HCT116 (cell line): ENCODE measurements at regions of chr4 and their contacts with region 1.

Region 1: DNA sequence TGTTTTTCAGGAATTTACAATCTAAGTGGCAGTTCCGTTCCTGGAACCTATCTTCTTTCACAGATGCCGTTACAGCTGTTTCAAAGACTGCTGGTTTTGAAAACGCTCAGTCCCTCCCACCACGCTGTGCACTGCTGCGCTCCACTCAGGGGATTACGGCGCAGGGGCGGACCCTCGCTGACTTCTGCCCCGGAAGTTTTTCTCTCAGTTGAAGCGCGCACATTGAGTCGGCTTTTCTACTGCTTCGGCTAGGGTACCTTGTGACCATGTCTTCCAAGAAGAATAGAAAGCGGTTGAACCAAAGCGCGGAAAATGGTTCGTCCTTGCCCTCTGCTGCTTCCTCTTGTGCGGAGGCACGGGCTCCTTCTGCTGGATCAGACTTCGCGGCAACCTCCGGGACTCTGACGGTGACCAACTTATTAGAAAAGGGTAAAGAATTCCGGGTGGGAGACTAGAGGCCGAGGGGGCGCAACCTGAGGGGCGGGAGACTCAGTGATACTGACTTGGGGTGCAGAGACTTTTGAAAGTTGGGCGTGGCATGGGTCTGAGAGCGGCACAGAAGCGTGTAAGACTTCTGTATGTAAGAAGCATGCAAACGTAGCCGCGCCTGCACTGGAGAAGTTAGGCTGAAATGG is 597 bp upstream of the NUDT6 start:
- DNase-seq: peak; percentile 73
- ATAC-seq: peak; percentile 91
- H3K4me3 ChIP-seq: peak overlapping the region; percentile 86 to 97
- H3K27ac ChIP-seq: peak overlapping the region; percentile 76
- H3K4me1 ChIP-seq: peaks cover 7 to 15% of the 10 kb centered on the region in 2 experiments; a peak in 3 of 4 replicates
- H3K27me3 ChIP-seq: no peaks in the 10 kb centered on the region
- CTCF ChIP-seq: no peak
- POLR2A ChIP-seq: peak; percentile 53
- RAD21 ChIP-seq: no peak

Region 2: GRCh38 chr4:122827879-122828601 is 95.0 kb before region 1 on chr4:
- CTCF ChIA-PET with region 1: no interaction called
- POLR2A ChIA-PET with region 1: no interaction called
- RAD21 ChIA-PET with region 1: no interaction called
- intact Hi-C with region 1: loop called (anchors 5 kb)
- DNase-seq: no peak
- ATAC-seq: peak; percentile 63
- H3K4me3 ChIP-seq: peak overlapping the region; percentile 63 to 77
- H3K27ac ChIP-seq: 0 out of 2 replicates have a peak overlapping the region, but pooled peaks have one; percentile 30
- H3K4me1 ChIP-seq: peaks cover 7 to 32% of the 10 kb centered on the region in 2 experiments; a peak in 3 of 4 replicates
- H3K27me3 ChIP-seq: no peaks in the 10 kb centered on the region
- CTCF ChIP-seq: 0 out of 6 replicates have a peak, but pooled peaks of 1 of the 3 experiments have one; percentile 20
- POLR2A ChIP-seq: no peak
- RAD21 ChIP-seq: no peak